Posterior vena cava (tissue), 2 donors: ENCODE measurements at regions of chr19 and their contacts with region 1.

Region 1: DNA sequence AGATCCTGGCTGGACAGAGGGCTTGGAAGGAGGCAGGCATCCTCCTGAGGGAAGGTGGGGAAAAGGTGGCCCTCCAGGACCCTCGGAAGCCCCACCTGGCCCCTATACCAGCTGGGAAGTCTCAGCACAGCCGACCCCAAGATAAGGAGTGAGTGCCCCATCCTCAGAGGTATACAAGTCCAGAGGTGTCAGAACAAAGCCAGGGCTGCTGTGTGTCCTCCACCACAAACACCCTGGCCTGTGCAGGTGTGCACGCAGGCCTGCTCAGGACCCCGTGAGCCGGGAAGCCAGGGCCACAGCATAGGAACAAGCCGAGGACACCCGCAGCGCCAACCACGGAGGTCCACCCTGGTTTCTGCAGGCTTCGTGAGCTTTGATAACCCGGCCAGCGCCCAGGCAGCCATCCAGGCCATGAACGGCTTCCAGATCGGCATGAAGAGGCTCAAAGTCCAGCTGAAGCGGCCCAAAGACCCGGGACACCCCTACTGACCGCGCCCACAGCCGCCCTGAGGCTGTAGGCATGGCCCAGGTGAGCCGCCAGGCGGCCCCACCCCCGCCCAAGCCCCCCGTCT is 68.6 kb downstream of the CELF5 start:
- DNase-seq: no peak

Region 2: DNA sequence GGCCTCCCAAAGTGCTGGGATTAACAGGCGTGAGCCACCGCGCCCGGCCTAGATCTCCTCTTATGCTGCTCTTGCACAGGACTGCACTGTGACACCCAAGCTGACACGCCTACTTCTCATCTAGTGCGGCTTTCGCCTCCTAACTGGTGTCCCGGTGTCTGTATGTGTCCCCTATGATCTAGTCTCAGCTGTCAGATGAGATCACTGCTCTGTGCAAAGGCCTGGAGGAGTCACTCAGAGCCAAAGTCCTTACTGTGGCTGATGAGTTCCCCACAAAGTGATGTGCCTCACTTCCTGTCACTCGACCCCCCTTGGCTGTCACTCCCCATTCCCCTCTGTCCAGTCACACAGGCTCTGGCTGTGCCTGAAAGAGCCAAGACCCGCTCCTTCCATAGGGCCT is 423.4 kb before region 1 on chr19:
- intact Hi-C with region 1: loop called in 1 of 2 experiments (anchors 2 kb)
- DNase-seq: no peak

Region 3: GRCh38 chr19:3360421-3361383 is 67.7 kb after region 1 on chr19:
- intact Hi-C with region 1: no loop called
- DNase-seq: peak; percentile 91

Region 4: DNA sequence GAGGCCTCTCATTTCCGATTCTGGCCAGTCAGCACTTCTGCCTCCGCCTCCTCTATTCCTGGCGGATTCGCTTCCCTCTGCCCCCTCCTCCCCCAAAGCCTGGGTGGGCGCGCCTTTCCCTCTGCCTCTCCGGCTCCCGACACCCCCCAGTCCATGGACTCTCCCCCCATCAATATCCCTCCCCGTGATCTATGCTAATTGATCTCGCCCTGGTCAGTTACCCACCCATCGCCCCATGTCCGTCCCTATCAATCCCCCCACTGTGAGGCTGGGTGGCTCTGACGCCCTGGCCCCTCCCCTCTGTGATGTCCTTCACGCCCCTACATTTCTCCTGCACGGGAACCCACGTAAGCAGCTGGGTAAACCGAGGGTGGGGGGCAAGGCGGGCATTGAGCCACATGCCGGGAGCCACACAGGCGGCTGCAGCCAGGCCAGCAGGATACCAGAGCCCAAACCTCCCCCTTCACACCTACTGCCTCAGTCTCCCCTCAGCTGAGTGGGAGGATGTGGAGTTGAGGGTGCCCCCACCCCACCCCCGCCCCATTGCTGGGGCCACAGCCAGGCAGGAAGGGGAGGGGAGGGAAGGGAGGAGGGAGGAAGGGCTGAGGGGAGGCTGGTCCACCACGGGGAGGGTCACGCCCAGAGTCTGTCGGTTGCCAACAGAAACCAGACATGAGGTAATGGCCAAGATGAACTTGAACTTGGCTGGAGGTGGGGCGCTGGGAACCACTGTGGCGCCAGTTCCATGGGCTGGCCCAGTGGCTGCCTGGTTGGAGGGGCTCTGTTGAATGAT is 166.2 kb after region 1 on chr19:
- intact Hi-C with region 1: no loop called
- DNase-seq: peak; percentile 96